ENCODE measurements at regions of chr10 and their contacts with region 1.

Region 1: DNA sequence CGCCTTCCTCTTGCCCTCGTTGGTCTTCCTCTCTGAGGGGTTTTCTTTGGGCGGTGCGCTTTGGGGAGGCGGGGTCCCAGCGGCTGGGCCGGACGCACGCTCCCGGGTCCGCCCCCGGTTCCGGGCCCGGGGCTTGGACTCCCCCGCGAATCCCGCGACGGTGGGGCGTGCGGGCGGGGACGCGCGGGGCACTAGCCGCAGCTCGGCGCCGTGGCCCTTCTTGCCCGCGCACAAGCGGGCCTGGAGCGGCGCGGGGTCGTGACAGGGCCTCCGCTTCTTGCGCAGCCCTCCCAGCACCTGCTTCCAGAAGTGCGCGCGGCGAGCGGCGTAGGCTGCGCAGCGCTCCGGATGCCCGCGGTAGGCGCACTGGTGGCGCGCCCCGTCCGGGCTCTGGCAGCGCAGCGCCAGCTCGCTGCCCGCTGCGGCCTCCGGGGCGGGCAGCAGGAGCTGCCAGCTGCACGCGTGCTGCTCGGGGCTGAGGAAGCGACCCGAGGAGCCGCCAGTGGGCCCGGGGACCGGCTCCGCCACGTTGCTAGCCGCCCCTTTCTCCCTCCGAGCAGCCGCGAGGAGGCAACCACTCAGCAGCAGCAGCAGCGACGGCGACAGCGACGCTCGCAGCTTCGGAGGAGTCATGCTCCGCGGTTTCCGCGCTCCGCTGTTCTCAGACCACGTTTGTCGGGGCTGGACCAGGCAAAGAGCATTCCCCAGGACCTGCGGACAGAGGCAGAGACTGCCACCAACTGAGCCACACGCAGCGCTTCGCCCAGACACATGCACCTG is 759 bp downstream of the FGFBP3 start:
- DNase-seq: peak; percentile 87 to 93
- ATAC-seq: peak; percentile 94
- H3K4me3 ChIP-seq: peak overlapping the region; percentile 64 to 86
- H3K27ac ChIP-seq: peak overlapping the region; percentile 2 to 70
- H3K4me1 ChIP-seq: no peaks in the 10 kb centered on the region
- H3K27me3 ChIP-seq: no peaks in the 10 kb centered on the region

Region 2: DNA sequence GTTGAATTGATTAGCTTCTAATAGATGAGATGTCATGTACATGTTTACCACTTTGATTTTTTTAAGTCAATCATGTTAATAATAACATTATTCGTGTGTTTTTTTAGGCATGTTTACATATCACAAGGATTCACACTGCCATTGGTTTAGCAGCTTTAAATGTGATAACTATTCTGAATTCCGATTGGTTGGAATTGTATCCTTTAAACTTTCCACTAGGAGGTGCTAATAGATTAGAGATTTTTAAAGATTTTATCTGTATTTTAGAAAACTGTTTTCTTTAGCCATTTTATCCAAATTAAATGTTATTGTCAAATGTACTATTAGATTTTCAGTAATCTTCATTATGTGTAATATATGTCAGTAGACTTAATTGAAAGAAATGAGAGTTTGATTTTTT is 415.2 kb before region 1 on chr10:
- intact Hi-C with region 1: loop called (anchors 10 kb)
- DNase-seq: no peak
- ATAC-seq: no peak
- H3K4me3 ChIP-seq: no peak overlapping the region
- H3K27ac ChIP-seq: no peak overlapping the region
- H3K4me1 ChIP-seq: no peaks in the 10 kb centered on the region
- H3K27me3 ChIP-seq: no peaks in the 10 kb centered on the region

Region 3: GRCh38 chr10:91758303-91759146 is 150.0 kb before region 1 on chr10:
- intact Hi-C with region 1: loop called (anchors 2 kb)
- DNase-seq: no peak
- ATAC-seq: no peak
- H3K4me3 ChIP-seq: no peak overlapping the region
- H3K27ac ChIP-seq: no peak overlapping the region
- H3K4me1 ChIP-seq: no peaks in the 10 kb centered on the region
- H3K27me3 ChIP-seq: no peaks in the 10 kb centered on the region

Region 4: GRCh38 chr10:91856637-91857036 is 51.9 kb before region 1 on chr10:
- intact Hi-C with region 1: loop called in 1 of 2 experiments (anchors 5 kb)
- DNase-seq: no peak
- ATAC-seq: no peak
- H3K4me3 ChIP-seq: no peak overlapping the region
- H3K27ac ChIP-seq: no peak overlapping the region
- H3K4me1 ChIP-seq: no peaks in the 10 kb centered on the region
- H3K27me3 ChIP-seq: no peaks in the 10 kb centered on the region

Measured in aorta (tissue), 5 donors.